ENCODE measurements at regions of chr3 and their contacts with region 1.

Region 1: DNA sequence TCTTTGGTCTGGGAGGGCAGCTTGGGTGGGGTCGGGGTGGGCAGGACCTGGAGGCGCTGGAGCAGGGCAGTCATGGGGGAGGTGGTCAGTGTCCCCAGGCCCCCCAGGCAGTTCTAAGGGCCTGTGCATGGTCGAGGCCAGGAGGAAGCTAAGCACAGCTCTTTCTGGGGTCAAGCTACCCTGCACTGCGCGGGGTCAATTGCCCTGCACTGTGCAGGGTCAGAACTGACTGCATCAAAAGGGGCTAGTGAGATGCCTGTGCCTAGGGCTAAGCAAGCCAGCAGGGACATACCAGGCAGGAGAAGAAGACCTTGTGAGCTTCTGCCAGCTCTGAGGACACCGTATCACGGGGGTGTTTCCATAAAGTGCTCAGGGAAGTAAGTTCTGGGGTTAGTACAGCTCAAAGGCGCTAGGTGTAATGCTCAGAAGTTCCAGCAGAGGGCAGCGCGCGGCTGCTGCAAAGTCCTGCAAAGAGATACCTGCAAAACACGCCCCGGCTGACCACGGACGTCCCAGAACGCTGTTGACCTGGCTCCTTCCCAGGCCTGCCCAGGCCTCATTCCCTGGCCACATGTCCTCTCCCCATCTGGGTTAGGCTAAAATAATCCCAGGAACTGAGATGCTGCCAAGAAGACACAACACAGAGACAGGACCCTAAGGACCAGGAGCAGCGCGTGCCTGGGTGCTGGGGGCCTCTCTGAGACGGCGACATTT is 18.8 kb upstream of the IQSEC1 start:
- DNase-seq: peak; percentile 87 to 96 (median 94)
- H3K4me3 ChIP-seq: no peak overlapping the region
- H3K27ac ChIP-seq: peak overlapping the region in 1 of 5 donors; percentile 59
- H3K4me1 ChIP-seq: no peaks in the 10 kb centered on the region
- H3K27me3 ChIP-seq: no peaks in the 10 kb centered on the region
- CTCF ChIP-seq: peak; percentile 94 to 96 (median 95)
- POLR2A ChIP-seq: no peak

Region 2: DNA sequence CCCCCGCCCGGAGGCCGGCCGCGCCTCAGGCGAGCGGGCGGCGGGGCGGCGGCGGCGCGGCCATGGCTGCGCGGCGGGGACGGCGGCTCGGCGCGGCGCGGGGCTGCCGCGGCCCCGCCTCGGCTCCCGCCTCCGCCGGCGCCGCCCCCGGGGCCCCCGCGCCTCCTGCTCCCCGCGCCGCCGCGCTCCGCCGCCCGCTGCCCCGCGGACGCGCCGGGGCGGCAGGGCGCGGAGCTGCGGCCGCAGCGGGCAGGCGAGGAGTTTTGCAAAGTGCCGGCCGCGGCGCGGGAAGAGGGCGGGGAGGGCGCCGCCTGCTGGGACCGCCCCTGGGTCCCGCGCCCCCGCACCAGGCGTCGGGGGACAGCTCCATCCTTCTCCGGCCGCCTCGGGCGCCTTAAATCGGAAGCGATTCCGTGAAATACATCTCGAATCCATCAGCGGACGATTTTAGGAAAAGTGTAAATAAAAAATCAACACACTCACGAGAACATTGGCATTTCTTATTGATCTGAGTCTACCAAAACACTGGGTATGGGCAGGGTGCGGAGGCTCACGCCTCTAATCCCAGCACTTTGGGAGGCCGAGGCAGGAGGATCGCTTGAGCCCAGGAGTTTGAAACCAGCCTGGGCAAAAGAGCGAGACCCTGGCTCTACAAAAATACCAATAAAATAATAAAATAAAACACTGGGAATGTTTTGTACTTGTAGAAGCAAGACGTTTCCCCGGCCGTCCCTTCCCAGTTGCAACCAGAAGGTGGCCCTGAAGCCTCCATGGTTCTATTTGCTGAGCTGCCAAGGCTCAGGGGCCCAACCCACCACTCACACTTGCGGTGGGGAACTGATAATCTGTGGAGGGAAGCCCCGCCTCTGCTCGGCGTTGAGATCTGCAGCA is 191.2 kb after region 1 on chr3:
- intact Hi-C with region 1: loop called in 1 of 2 experiments (anchors 10 kb)
- DNase-seq: no peak
- H3K4me3 ChIP-seq: peak overlapping the region in 1 of 4 donors; percentile 55
- H3K27ac ChIP-seq: no peak overlapping the region
- H3K4me1 ChIP-seq: peaks cover 0 to 9% of the 10 kb centered on the region in 2 donors
- H3K27me3 ChIP-seq: peaks cover 28% of the 10 kb centered on the region
- CTCF ChIP-seq: peak in 3 of 6 experiments; percentile 18 to 31 (median 24)
- POLR2A ChIP-seq: no peak

Region 3: GRCh38 chr3:13452490-13453335 is 360.7 kb after region 1 on chr3:
- intact Hi-C with region 1: loop called (anchors 5 kb)
- DNase-seq: peak; percentile 28 to 67 (median 52)
- H3K4me3 ChIP-seq: peak overlapping the region in 1 of 4 donors; percentile 57
- H3K27ac ChIP-seq: peak overlapping the region in 3 of 5 donors; percentile 75 to 93 (median 82)
- H3K4me1 ChIP-seq: peaks cover 0 to 11% of the 10 kb centered on the region in 2 donors
- H3K27me3 ChIP-seq: no peaks in the 10 kb centered on the region
- CTCF ChIP-seq: peak in 5 of 6 experiments; percentile 62 to 76 (median 70)
- POLR2A ChIP-seq: no peak

Region 4: GRCh38 chr3:13461169-13462158 is 369.4 kb after region 1 on chr3:
- intact Hi-C with region 1: loop called in 1 of 2 experiments (anchors 5 kb)
- DNase-seq: peak in 5 of 7 donors; percentile 34 to 59 (median 44)
- H3K4me3 ChIP-seq: no peak overlapping the region
- H3K27ac ChIP-seq: no peak overlapping the region
- H3K4me1 ChIP-seq: no peaks in the 10 kb centered on the region
- H3K27me3 ChIP-seq: peaks cover 7% of the 10 kb centered on the region
- CTCF ChIP-seq: peak; percentile 26 to 55 (median 41)
- POLR2A ChIP-seq: no peak

Region 5: DNA sequence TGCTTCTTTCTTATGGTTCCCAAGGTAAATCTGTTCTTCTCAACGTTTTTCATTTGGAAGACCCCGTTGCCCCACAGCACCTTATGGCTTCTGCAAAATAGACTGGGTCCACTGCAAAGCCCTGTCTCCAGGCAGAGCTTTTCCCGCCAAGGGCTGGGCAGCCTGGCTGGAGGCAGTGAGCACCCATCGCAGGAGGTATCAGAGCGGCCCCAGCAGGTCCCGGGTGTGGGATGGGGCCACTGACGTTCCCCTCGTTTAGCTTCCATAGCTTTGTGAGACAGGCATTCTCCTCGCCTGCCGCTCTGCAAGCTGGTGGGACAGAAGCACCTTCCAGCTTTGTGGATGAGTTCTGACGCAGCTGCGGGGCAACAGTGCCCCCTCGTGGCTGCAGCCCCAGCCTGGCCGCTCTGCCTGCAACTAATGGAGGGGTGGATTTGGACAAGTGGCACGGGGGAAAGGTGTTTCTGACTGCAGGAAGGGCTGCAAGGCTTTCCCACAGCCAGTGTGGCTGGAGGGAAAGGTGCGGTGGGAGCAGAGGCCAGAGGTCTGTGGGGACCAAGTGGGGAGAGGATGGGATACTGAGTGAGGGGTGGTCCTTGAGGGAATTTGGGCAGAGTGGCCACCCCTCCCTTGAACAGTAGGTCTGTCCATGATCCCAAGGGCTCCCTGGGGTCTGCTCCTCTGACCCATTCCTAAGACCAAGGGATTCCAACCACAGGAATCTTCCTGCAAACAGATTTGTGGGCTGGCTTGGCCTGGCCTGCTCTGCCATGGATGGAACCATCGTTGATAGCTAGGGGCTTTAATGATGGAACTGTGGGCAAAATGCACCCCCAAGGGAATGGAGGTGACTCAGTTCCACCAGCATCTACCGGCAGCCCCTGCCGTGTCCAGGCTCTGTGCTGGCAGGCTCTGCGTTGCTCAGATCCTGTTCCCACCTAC is 556.3 kb after region 1 on chr3:
- intact Hi-C with region 1: loop called (anchors 5 to 10 kb)
- DNase-seq: peak; percentile 70 to 91 (median 82)
- H3K4me3 ChIP-seq: no peak overlapping the region
- H3K27ac ChIP-seq: no peak overlapping the region
- H3K4me1 ChIP-seq: no peaks in the 10 kb centered on the region
- H3K27me3 ChIP-seq: peaks cover 4% of the 10 kb centered on the region
- CTCF ChIP-seq: peak; percentile 87 to 99 (median 94)
- POLR2A ChIP-seq: no peak